ENCODE measurements at regions of chr7 and their contacts with region 1.

Region 1: DNA sequence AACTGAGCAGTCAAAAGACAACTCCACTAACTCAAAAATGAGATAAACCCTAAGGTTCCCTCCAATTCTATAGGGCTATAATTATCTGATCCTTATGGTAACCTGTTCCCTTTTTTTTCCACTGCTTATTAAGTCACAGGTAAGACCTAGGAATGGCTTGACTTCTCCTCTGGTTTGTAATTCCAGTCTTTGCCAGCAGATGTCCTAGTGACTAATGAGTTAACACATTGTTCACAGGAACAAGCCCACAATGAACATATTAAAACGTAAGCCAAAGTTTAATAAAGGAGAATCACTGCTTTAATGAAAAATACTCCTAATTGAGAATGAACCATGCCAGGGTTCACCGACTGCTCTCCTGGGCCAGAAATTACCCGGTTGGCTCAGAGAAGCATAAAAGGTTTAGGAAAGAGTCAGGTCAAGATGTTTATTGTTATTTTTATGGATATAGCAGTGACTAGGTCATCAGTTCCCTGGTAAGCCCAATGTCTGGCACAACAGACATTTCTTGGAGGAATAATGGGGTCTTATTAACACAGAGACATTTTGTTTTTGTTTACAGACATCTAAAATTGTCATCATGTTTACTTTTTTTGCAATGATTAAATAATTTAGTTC is 120.1 kb downstream of the ELAPOR2 start:
- DNase-seq: peak; percentile 52 to 76
- H3K4me3 ChIP-seq: no peak overlapping the region
- H3K4me1 ChIP-seq: no peaks in the 10 kb centered on the region
- H3K27me3 ChIP-seq: peaks cover 2% of the 10 kb centered on the region; the same call in 1 of the 2 replicates

Region 2: DNA sequence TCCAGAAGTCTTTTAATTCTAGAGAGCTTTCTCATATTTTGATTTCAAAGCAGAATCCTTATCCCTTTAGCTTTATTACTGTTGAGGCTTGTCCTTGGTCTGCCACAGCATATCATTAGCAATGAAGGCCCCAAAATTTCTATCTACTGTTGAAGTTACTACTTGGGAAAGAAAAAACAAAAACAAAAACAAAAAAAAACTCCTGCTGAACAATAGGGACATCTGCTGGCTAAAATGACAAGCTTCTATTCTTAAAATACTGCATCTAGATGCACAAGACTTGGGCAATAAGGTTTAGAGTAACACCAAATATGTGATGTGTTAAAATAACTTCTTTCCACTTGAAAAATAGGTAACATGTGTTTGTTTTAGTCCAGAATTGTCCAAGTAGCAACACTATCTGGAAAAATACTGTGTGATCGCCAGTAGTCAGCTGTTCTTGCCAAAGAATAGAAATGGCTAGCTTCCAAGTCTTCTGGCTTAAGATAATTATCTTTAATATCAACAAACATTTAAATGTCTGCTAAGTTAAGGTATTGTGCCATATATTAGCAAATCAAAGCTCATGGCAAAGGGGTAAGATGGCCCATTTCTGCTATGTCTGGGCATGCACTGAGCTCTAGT is 209.1 kb after region 1 on chr7:
- in situ Hi-C with region 1: loop called (anchors 25 kb)
- DNase-seq: no peak
- H3K4me3 ChIP-seq: no peak overlapping the region
- H3K4me1 ChIP-seq: no peaks in the 10 kb centered on the region
- H3K27me3 ChIP-seq: no peaks in the 10 kb centered on the region; the same call in 1 of the 2 replicates

Region 3: GRCh38 chr7:87225696-87226095 is 286.4 kb after region 1 on chr7:
- in situ Hi-C with region 1: loop called (anchors 25 kb)
- DNase-seq: no peak
- H3K4me3 ChIP-seq: no peak overlapping the region
- H3K4me1 ChIP-seq: peaks cover 1% of the 10 kb centered on the region
- H3K27me3 ChIP-seq: 0 out of 2 replicates have a peak, but pooled peaks cover 7% of the 10 kb centered on the region

Region 4: GRCh38 chr7:87267239-87267900 is 328.1 kb after region 1 on chr7:
- in situ Hi-C with region 1: no loop called
- DNase-seq: no peak
- H3K4me3 ChIP-seq: no peak overlapping the region
- H3K4me1 ChIP-seq: no peaks in the 10 kb centered on the region
- H3K27me3 ChIP-seq: no peaks in the 10 kb centered on the region

Region 5: DNA sequence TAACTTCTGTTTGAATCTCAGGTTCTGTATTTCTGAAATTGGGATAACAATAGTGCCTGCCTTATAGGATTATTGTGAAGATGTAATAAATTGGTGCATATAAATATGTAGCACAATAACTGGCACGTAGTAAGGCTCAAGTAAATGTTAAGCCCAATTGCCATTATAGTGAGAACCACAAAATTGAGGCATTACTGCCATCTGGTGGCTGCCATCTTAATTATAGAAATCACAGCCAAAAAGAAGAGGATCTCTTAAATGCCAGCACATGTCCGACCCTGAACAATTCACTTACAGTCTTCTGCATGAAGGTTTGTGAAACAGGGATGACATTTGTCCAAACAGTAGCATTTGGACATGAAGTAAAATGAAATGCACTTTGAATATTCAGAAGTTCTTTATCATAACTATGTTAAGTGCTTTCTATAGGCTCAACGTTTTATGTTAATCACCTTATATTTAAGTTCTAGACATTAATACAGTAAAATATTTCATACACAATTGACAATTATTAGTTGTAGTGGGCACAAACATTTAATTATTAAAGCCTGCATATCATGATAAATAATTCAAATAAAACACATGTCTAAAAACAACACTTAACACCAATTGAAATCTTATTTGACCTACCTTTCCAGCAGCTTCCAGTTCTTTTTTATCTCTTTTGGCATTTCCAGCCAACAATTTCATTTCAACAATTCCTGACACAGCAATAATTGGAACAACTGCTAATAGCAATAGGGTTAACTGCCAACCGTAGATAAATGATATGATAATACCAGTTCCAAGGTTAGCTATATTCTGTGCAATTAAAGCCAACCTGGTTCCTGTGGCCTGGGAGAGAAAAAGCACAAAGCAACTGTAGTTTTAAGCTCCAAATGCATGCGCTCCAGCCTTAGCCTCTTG is 477.6 kb after region 1 on chr7:
- in situ Hi-C with region 1: loop called (anchors 25 kb)
- DNase-seq: peak; percentile 64 to 80
- H3K4me3 ChIP-seq: no peak overlapping the region
- H3K4me1 ChIP-seq: no peaks in the 10 kb centered on the region
- H3K27me3 ChIP-seq: no peaks in the 10 kb centered on the region

Measured in HAP-1 (cell line).